ENCODE measurements at regions of chr11 and their contacts with region 1.

Region 1: DNA sequence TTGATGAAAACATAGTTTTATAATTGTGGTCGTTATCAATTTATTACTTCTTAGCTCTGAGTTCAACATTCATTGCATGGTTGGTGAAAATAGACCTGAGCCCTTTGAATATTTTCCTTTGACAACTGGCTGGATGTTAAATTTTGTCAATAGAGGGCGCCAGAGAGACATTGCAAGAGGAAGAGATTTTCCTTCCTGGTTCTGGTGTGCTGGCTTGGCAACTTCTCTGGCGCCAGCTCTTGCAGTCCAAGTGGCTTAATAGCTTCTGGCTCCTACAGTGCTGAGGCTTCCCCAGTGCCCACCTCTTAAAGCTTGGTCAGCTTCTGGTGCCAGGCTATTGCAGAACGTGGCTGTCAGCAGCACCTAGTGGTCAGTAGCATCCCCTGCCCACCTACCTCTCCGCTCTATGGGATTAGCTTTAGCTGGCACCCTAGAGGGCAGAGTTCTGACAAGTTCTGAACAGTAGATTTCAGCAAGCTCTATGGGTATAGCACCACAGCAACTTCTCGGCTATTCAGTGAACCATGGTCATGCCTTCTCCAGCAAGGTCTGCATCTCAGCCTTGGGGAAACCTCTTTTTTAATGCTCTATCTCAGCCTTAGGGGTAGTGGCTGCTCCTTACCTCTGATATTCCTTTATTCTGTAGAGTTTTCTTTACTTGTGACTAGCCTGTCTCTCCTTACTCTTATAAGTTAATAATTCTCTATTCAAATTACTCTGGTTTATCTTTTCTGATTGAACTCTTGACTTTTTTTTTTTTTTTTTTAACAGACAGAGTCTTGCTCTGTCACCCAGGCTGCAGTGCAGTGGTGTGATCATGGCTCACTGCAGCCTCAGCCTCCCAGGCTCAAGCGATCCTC is 59.4 kb downstream of the ACER3 start:
- DNase-seq: peak; percentile 48
- ATAC-seq: peak; percentile 85
- H3K4me3 Mint-ChIP-seq: no peak overlapping the region
- H3K27ac Mint-ChIP-seq: no peak overlapping the region
- H3K4me1 Mint-ChIP-seq: peaks cover 14% of the 10 kb centered on the region
- H3K27me3 Mint-ChIP-seq: no peaks in the 10 kb centered on the region
- CTCF ChIP-seq: peak; percentile 78

Region 2: DNA sequence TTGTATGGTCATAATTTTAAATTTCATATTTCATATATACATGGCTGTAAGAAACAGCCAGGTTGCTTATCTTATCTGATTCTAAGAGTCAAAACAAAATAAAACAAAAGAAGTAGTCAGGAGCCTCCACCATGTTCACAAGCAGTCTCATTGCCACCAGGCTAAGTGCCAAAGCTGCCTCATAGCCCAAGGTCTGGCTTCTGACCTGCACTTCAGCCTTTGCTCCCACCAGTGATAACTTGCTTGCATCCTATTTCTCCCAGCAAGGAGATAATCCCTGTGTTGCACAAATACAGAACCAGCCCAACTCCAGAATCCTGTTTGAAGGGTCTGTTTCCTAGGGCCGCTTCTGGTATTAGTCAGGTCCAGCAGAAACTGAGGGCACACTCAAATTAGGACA is 190.9 kb before region 1 on chr11:
- CTCF ChIA-PET with region 1: interaction called, 133 read pairs
- POLR2A ChIA-PET with region 1: interaction called, 3 read pairs
- DNase-seq: no peak
- ATAC-seq: no peak
- H3K4me3 Mint-ChIP-seq: no peak overlapping the region
- H3K27ac Mint-ChIP-seq: no peak overlapping the region
- H3K4me1 Mint-ChIP-seq: peaks cover 3% of the 10 kb centered on the region
- H3K27me3 Mint-ChIP-seq: peaks cover 9% of the 10 kb centered on the region; the same call in 1 of the 2 replicates
- CTCF ChIP-seq: no peak

Region 3: DNA sequence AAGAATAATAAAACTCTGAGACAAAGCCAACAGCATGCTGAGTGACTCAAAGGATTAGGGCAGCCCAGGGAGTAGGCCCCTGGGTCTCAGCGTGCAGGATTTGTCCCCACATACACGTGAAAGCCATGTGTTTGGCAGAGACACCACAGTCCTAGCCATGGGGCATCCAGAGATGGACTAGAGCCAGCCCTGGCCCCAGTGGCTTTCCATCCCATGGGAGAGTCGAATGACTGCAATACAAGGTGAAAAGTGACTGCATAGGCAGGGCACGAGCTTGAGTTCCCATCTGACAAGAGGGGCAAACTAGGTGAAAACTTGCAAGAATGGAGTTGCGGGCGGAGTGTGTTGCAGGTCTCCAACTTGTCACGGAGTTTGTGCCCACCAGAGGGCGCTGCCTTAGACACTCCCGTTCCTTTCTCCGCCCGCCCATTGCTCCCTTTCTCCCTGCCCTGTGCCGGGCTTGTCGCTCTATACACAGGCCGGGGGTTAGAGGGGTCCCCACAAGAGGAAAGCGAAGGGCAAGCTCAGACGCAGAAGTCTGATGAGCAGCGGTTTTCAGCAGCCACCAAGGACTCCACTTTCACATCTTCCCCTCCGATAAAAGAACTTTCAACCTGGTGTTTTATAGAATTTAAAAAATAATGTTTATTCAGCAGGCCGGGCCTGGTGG is 112.8 kb before region 1 on chr11:
- CTCF ChIA-PET with region 1: interaction called, 46 read pairs
- POLR2A ChIA-PET with region 1: no interaction called
- DNase-seq: peak; percentile 95
- ATAC-seq: peak; percentile 93
- H3K4me3 Mint-ChIP-seq: no peak overlapping the region
- H3K27ac Mint-ChIP-seq: no peak overlapping the region
- H3K4me1 Mint-ChIP-seq: peaks cover 12% of the 10 kb centered on the region
- H3K27me3 Mint-ChIP-seq: no peaks in the 10 kb centered on the region; the same call in 1 of the 2 replicates
- CTCF ChIP-seq: peak; percentile 76

Region 4: GRCh38 chr11:76872959-76873827 is 46.9 kb before region 1 on chr11:
- CTCF ChIA-PET with region 1: interaction called, 12 read pairs
- POLR2A ChIA-PET with region 1: no interaction called
- DNase-seq: no peak
- ATAC-seq: no peak
- H3K4me3 Mint-ChIP-seq: no peak overlapping the region
- H3K27ac Mint-ChIP-seq: no peak overlapping the region
- H3K4me1 Mint-ChIP-seq: peaks cover 5% of the 10 kb centered on the region
- H3K27me3 Mint-ChIP-seq: no peaks in the 10 kb centered on the region
- CTCF ChIP-seq: no peak

Region 5: GRCh38 chr11:76997512-76997911 is 77.4 kb after region 1 on chr11:
- CTCF ChIA-PET with region 1: interaction called, 14 read pairs
- POLR2A ChIA-PET with region 1: no interaction called
- DNase-seq: no peak
- ATAC-seq: no peak
- H3K4me3 Mint-ChIP-seq: no peak overlapping the region
- H3K27ac Mint-ChIP-seq: no peak overlapping the region
- H3K4me1 Mint-ChIP-seq: peaks cover 5% of the 10 kb centered on the region
- H3K27me3 Mint-ChIP-seq: no peaks in the 10 kb centered on the region
- CTCF ChIP-seq: no peak

Region 6: DNA sequence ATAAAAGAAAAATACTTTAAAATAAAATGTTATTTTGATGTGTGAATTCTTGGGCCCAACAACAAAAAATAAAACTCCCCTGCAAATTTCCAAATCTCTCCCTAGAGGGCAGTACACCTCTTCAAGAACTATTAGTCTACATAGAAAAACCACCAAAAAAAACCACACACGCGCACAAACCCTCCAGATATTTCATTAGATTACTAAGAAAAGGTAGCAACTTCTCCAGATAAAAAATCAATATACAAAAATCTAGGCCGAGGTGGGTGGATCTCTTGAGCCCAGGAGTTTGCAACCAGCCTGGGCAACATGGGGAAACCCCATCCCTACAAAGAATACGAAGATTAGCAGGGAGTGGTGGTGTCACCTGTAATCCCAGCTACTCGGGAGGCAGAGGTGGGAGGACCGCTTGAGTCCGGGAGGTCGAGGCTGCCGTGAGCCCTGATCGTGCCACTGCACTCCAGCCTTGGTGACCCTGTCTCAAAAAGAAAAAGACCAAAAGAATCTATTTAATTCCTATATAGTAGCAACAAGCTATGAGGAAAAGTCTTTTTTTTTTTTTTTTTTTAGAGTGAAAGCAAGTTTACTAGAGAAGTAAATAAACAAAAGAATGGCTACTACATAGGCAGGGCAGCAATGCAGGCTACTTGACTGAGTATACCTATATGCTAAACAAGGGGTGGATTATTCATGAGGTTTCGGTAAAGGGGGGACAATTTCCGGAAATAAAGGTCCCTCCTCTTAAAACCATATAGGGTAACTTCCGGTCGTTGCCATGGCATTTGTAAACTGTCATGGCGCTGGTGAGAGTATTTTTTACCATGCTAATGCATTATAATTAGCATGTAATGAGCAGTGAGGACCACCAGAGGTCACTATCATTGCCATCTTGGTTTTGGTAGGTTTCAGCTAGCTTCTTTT is 127.2 kb after region 1 on chr11:
- CTCF ChIA-PET with region 1: interaction called, 86 read pairs
- POLR2A ChIA-PET with region 1: interaction called, 3 read pairs
- DNase-seq: peak; percentile 61
- ATAC-seq: peak; percentile 80
- H3K4me3 Mint-ChIP-seq: peak overlapping the region; percentile 51
- H3K27ac Mint-ChIP-seq: peak overlapping the region; percentile 52
- H3K4me1 Mint-ChIP-seq: peaks cover 14% of the 10 kb centered on the region
- H3K27me3 Mint-ChIP-seq: peaks cover 16% of the 10 kb centered on the region
- CTCF ChIP-seq: no peak

Measured in WTC11 (cell line).